Activated naive CD4-positive, alpha-beta T cell treated with anti-CD3 and anti-CD28 coated beads for 36 hours (primary cell): ENCODE measurements at regions of chr4 and their contacts with region 1.

Region 1: DNA sequence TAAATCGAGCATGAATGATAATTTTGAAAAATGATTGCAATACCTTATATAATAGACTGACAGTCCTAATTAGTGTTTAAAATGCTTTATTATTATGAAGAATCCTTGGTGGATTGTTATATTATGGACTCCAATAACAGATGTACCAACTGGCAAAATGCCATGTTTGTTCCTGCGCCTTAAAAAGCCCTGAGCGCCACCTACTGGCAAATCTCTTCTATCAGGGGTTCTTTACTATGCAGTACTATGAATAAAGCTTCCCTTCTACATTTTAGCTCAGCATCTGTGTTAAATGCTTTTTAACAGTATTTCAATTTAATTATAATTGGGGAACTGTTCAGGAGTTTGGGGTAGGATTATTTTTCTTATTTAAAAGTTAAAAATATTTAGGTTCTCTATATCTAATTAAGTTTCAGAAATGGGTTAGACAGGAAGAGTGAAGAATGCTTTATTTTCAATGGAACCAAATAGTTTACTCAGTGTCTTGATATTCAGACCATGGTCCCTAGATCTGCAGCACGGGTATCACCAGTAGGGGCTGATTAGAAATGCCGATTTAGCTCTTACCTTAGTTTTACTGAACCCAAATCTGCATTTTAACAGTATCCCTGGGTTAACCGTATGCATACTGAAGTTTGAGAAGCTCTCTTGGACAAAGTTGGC is 20.1 kb downstream of the CFAP97 start:
- DNase-seq: peak; percentile 88
- H3K4me3 Mint-ChIP-seq: no peak overlapping the region
- H3K27ac Mint-ChIP-seq: no peak overlapping the region
- H3K4me1 Mint-ChIP-seq: peaks cover 50% of the 10 kb centered on the region
- H3K27me3 Mint-ChIP-seq: no peaks in the 10 kb centered on the region

Region 2: DNA sequence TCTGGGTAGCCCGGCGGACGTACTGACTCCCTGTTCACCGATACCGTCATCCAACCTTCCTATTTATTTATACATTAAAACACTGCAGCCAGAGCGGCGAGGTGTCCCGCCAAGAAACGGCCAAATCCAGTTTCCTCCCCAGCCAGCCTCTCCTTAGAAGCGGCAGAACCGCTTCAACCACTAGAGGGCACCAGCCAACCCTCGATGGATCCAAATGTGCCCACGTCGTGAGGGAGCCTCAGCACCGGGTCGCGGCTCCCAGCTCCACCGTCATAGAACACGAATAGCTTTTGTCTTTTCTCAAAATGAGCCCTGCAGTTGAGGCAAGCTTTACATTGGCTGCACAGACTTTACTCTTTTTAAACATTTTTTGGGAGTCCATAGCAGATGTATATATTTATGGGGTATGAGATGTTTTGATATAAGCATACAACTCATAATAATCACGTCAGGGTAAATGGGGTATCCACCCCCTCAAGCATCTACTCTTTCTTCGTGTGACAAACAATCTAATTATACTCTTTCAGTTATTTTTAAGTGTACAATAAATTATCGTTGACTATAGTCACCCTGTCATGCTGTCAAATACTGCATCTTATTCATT is 178.4 kb before region 1 on chr4:
- CTCF ChIA-PET with region 1: interaction called, 3 read pairs
- intact Hi-C with region 1: loop called (anchors 1 kb)
- DNase-seq: peak; percentile 92
- H3K4me3 Mint-ChIP-seq: peak overlapping the region; percentile 17
- H3K27ac Mint-ChIP-seq: no peak overlapping the region
- H3K4me1 Mint-ChIP-seq: peaks cover 6% of the 10 kb centered on the region
- H3K27me3 Mint-ChIP-seq: peaks cover 28% of the 10 kb centered on the region

Region 3: GRCh38 chr4:185096032-185096653 is 87.6 kb before region 1 on chr4:
- CTCF ChIA-PET with region 1: interaction called, 5 read pairs
- intact Hi-C with region 1: loop called (anchors 1 kb)
- DNase-seq: peak; percentile 57
- H3K4me3 Mint-ChIP-seq: no peak overlapping the region
- H3K27ac Mint-ChIP-seq: no peak overlapping the region
- H3K4me1 Mint-ChIP-seq: no peaks in the 10 kb centered on the region
- H3K27me3 Mint-ChIP-seq: peaks cover 8% of the 10 kb centered on the region

Region 4: GRCh38 chr4:185165605-185166063 is 18.1 kb before region 1 on chr4:
- CTCF ChIA-PET with region 1: interaction called, 10 read pairs
- intact Hi-C with region 1: no loop called
- DNase-seq: no peak
- H3K4me3 Mint-ChIP-seq: no peak overlapping the region
- H3K27ac Mint-ChIP-seq: no peak overlapping the region
- H3K4me1 Mint-ChIP-seq: peaks cover 22% of the 10 kb centered on the region
- H3K27me3 Mint-ChIP-seq: no peaks in the 10 kb centered on the region

Region 5: DNA sequence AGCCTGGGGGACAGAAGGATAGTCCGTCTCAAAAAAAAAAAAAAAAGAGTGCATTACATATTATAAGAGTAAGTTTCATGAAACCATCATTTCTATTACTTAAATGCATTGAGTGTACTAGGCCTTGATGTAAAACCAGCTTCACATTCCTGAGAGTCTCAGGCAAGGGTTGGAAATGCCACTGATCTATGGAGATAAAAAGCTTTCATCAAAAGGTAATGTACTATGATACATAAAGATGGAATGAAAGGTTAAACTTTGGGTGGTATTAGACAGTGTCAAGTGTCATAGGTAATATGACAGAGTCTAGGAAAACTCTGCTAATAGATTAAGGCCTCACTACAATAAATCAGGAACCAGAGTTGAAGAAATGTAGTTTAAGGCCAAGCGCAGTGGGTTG is 12.7 kb after region 1 on chr4:
- CTCF ChIA-PET with region 1: interaction called, 21 read pairs
- intact Hi-C with region 1: no loop called
- DNase-seq: no peak
- H3K4me3 Mint-ChIP-seq: no peak overlapping the region
- H3K27ac Mint-ChIP-seq: no peak overlapping the region
- H3K4me1 Mint-ChIP-seq: peaks cover 28% of the 10 kb centered on the region
- H3K27me3 Mint-ChIP-seq: no peaks in the 10 kb centered on the region

Region 6: DNA sequence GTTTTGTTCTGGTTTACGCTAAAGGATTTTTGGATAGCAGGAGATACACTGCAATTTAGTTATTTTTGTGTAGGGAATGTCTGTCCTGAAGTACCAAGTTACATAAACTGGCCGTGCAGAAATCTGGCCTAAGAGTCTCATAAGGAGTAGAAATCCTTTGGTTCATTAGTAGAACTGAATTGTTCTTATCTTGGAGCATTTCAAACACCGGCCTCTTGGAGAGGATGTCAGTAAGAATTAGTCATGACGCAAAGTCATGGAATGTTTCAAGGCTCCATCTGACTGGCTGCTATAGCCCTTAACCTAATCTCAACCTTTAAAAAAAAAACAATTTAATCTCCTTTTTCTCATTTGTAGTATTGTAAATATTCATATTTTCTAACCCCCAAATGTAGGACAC is 336.4 kb after region 1 on chr4:
- CTCF ChIA-PET with region 1: no interaction called
- intact Hi-C with region 1: no loop called
- DNase-seq: no peak
- H3K4me3 Mint-ChIP-seq: no peak overlapping the region
- H3K27ac Mint-ChIP-seq: no peak overlapping the region
- H3K4me1 Mint-ChIP-seq: no peaks in the 10 kb centered on the region
- H3K27me3 Mint-ChIP-seq: peaks cover 12% of the 10 kb centered on the region

Region 7: DNA sequence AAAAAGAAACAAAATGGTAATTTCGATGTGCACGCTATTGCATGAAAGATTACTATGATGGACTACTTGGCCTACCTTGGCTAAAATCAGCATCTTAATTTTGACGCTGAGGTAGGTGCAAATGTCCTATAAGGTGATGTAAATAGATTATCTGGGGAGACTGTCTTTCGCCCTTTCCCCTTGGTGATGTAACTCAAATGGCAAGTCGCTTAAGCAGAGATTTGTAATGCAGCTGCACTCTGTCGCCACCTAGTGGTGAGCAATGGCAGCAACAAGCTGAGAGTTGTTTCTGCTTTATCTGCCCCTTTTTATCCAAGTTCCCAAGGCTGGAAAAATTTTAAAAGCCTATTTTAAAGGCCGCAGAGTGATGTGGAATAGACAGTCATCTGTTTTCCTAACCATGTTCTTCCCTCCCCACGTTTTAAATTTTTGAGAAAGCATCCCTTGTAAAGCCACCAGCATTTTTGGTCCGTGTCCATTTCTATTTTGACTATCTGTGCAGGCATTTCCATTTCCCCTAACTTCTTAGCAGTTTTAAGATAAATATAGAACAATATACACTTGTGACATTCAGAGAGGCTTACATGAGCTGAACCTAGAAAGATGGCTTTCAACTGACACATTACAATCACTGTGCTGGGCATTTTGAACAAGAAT is 413.9 kb after region 1 on chr4:
- CTCF ChIA-PET with region 1: interaction called, 3 read pairs
- intact Hi-C with region 1: loop called (anchors 1 kb)
- DNase-seq: peak; percentile 84
- H3K4me3 Mint-ChIP-seq: no peak overlapping the region
- H3K27ac Mint-ChIP-seq: no peak overlapping the region
- H3K4me1 Mint-ChIP-seq: no peaks in the 10 kb centered on the region
- H3K27me3 Mint-ChIP-seq: peaks cover 13% of the 10 kb centered on the region